ENCODE measurements at regions of chr1 and their contacts with region 1.

Region 1: GRCh38 chr1:231050395-231050794 is 10.3 kb upstream of the FAM89A start:
- DNase-seq: no peak
- ATAC-seq: no peak
- H3K4me3 ChIP-seq: no peak overlapping the region
- H3K27ac ChIP-seq: no peak overlapping the region
- H3K4me1 ChIP-seq: peaks cover 9% of the 10 kb centered on the region
- H3K27me3 ChIP-seq: peaks cover 20% of the 10 kb centered on the region
- CTCF ChIP-seq: no peak

Region 2: DNA sequence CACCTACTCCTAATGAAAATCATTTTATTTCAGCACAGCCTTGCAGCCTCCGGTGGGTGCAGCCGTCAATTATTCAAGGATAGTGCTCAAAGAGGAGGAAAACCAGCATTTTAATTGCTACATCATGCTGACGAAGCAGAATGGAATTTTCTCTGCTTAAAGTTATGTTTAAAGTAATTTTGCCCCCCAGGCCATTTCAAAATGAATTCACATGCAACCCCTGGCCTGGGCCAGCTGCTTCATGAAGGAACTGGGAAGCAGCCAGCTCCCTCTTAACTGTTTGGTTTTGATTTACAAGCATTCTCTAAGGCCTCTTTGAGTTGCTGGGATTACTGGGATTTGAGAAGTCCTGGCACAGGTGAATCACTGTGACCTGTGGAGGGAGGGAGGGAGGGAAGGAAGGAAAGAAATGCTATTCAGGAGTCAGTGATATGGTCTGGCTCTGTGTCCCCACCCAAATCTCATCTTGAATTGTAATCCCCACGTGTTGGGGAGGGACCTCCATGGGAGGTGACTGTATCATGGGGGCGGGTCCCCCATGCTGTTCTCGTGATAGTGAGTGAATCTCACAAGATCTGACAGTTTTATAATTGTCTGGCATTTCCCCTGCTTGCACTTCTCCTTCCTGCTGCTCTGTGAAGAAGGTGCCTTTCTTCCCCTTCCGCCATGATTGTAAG is 690.3 kb before region 1 on chr1:
- CTCF ChIA-PET with region 1: no interaction called
- POLR2A ChIA-PET with region 1: interaction called, 19 read pairs
- intact Hi-C with region 1: no loop called
- DNase-seq: peak; percentile 93
- ATAC-seq: peak; percentile 81
- H3K4me3 ChIP-seq: no peak overlapping the region
- H3K27ac ChIP-seq: peak overlapping the region; percentile 27
- H3K4me1 ChIP-seq: peaks cover 13% of the 10 kb centered on the region
- H3K27me3 ChIP-seq: peaks cover 23% of the 10 kb centered on the region
- CTCF ChIP-seq: no peak

Measured in PC-3 (cell line).